Brain microvascular endothelial cell (primary cell): ENCODE measurements at regions of chr16 and their contacts with region 1.

Region 1: GRCh38 chr16:10541366-10541765 is 39.0 kb downstream of the EMP2 start:
- DNase-seq: no peak
- H3K4me3 ChIP-seq: no peak overlapping the region
- H3K27ac ChIP-seq: no peak overlapping the region
- H3K27me3 ChIP-seq: no peaks in the 10 kb centered on the region
- CTCF ChIP-seq: no peak

Region 2: DNA sequence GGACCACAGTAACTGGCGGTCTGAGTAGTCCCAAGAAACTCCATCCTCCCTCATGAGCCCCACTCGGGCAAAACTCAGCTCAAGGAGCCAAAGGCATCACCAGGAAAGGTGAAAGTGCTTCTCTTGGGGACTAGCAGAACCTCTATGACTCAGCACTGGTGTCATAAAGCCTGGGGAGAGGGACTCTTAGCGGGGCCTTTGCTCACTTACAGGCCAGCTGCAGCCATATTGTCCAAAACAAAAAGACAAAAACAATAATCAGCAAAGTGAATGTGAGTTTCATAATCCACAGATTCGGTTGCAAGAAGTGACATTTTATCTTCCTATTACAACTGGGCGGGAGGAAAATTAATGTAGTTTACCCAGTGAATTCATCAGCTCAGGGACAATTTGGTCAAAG is 153.5 kb after region 1 on chr16 and contains the start of gene TEKT5:
- in situ Hi-C with region 1: no loop called
- DNase-seq: no peak
- H3K4me3 ChIP-seq: no peak within 1 kb of the TSS
- H3K27ac ChIP-seq: no peak within 1 kb of the TSS
- H3K27me3 ChIP-seq: no peaks in the 10 kb centered on the region
- CTCF ChIP-seq: no peak

Region 3: GRCh38 chr16:10743610-10744393 is 202.4 kb after region 1 on chr16 and contains the start of gene NUBP1:
- in situ Hi-C with region 1: loop called (anchors 25 kb)
- DNase-seq: peak; percentile 99
- H3K4me3 ChIP-seq: peak within 1 kb of the TSS; percentile 77
- H3K27ac ChIP-seq: peak within 1 kb of the TSS; percentile 99
- H3K27me3 ChIP-seq: no peaks in the 10 kb centered on the region
- CTCF ChIP-seq: no peak